GM12878 (cell line): ENCODE measurements at regions of chr5 and their contacts with region 1.

Region 1: DNA sequence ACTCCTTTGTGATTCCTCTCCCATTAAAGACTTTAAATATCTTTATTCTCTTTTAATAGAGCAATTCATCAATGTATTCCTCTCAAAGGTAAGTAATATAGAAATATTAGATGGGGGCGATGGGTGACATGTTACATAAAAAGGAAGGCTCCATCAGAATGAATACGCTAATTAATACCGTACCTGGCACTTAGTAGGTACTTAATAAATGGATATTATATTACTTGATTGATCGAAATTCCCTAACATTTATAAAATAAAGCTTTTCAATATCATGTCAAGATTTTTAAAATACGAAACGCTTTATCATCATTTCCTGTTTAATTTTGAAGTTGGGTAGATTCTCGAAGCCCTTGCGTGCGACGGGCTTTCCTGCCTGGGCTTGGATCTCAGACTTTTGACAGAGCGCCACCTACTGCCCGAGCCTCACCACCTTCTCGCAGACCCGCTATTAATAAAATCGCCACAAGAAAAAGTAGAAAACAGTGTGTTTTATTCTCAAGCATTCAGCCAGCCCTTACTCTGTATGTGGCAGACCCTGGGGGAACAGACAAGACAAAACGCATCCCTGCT is 99.4 kb downstream of the C5orf15 start:
- DNase-seq: no peak
- ATAC-seq: peak; percentile 85
- H3K4me3 ChIP-seq: no peak overlapping the region
- H3K27ac ChIP-seq: no peak overlapping the region
- H3K4me1 ChIP-seq: no peaks in the 10 kb centered on the region
- H3K27me3 ChIP-seq: no peaks in the 10 kb centered on the region
- CTCF ChIP-seq: peak; percentile 77 to 88 (median 82)
- EP300 ChIP-seq: no peak
- POLR2A ChIP-seq: no peak
- RAD21 ChIP-seq: peak; percentile 81

Region 2: GRCh38 chr5:133111299-133111698 is 757.7 kb before region 1 on chr5:
- CTCF ChIA-PET with region 1: interaction called, 7 read pairs
- POLR2A ChIA-PET with region 1: no interaction called
- RAD21 ChIA-PET with region 1: no interaction called
- SMC1A ChIA-PET with region 1: interaction called, 5 read pairs
- in situ Hi-C with region 1: loop called (anchors 10 kb)
- intact Hi-C with region 1: loop called (anchors 5 kb)
- DNase-seq: peak; percentile 45
- ATAC-seq: peak; percentile 84
- H3K4me3 ChIP-seq: no peak overlapping the region
- H3K27ac ChIP-seq: no peak overlapping the region
- H3K4me1 ChIP-seq: peaks cover 14% of the 10 kb centered on the region
- H3K27me3 ChIP-seq: no peaks in the 10 kb centered on the region
- CTCF ChIP-seq: peak; percentile 88 to 99 (median 92); a peak in 5 of 6 replicates
- EP300 ChIP-seq: no peak
- POLR2A ChIP-seq: no peak
- RAD21 ChIP-seq: peak; percentile 99

Region 3: DNA sequence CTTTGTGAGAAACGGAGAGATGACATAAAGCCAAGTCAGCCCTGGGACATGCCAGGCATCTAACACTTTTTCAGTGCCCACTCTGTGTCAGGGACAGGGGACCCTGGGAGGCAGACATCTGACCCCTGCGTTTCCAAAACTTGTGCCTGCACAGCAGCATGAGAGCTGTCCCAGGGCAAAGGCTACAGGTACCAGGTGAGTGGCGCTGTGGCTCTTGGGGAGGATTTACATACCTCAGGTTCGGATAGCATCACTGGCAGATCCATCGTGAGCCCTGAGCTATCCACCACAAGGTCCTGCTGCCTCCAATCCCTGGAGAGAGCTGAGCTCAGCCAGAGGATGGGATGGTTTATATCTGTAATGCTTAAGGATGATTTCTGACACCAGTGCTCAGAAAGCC is 309.1 kb before region 1 on chr5:
- CTCF ChIA-PET with region 1: interaction called, 13 read pairs
- POLR2A ChIA-PET with region 1: no interaction called
- RAD21 ChIA-PET with region 1: no interaction called
- SMC1A ChIA-PET with region 1: no interaction called
- in situ Hi-C with region 1: no loop called
- intact Hi-C with region 1: no loop called
- DNase-seq: no peak
- ATAC-seq: no peak
- H3K4me3 ChIP-seq: no peak overlapping the region
- H3K27ac ChIP-seq: no peak overlapping the region
- H3K4me1 ChIP-seq: no peaks in the 10 kb centered on the region
- H3K27me3 ChIP-seq: peaks cover 0 to 5% of the 10 kb centered on the region in 2 experiments; a peak in 3 of 4 replicates
- CTCF ChIP-seq: no peak
- EP300 ChIP-seq: no peak
- POLR2A ChIP-seq: no peak
- RAD21 ChIP-seq: no peak

Region 4: DNA sequence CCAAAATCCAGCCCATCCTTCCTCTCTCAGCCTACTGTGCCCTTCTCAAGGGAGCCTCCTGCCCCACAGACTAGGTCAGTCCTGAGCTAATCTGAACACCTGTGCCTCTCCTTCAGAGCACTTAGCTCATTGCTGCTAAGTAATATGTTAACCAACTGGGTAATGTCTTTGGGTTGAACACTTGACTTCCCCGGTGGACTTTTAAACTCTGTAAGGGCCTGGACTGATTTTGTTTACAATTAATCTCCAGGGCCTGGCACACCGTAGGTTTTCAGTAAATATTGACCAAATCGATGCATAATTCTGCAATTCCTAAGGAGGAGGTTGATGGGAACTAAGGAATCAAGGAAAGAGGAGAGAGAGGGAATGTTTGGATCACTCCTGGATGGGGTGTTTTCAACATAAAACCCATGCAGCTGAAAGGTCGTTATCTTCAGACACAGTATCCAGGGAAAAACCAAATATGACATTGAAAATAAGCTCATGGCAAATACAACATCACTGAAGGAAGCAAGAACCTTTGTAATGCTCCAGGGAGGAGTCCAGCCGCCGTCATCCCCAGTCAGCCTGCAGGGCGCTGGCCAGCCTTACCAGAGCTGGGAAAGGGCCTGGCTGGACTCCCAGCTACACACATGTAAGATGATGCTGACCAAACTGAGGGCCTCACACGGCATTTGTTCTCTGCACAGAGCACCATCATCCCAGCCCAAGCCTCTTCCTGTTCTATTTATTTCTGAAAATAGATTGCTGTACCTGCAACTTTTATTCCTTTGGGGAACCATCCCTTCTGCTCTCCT is 66.9 kb before region 1 on chr5:
- CTCF ChIA-PET with region 1: interaction called, 10 read pairs
- POLR2A ChIA-PET with region 1: no interaction called
- RAD21 ChIA-PET with region 1: no interaction called
- SMC1A ChIA-PET with region 1: interaction called, 5 read pairs
- in situ Hi-C with region 1: no loop called
- intact Hi-C with region 1: no loop called
- DNase-seq: no peak
- ATAC-seq: no peak
- H3K4me3 ChIP-seq: no peak overlapping the region
- H3K27ac ChIP-seq: no peak overlapping the region
- H3K4me1 ChIP-seq: no peaks in the 10 kb centered on the region
- H3K27me3 ChIP-seq: peaks cover 0 to 8% of the 10 kb centered on the region in 2 experiments; a peak in 2 of 4 replicates
- CTCF ChIP-seq: no peak
- EP300 ChIP-seq: no peak
- POLR2A ChIP-seq: no peak
- RAD21 ChIP-seq: no peak

Region 5: GRCh38 chr5:133838286-133838685 is 30.7 kb before region 1 on chr5:
- CTCF ChIA-PET with region 1: interaction called, 10 read pairs
- POLR2A ChIA-PET with region 1: no interaction called
- RAD21 ChIA-PET with region 1: interaction called, 3 read pairs
- SMC1A ChIA-PET with region 1: interaction called, 7 read pairs
- in situ Hi-C with region 1: no loop called
- intact Hi-C with region 1: no loop called
- DNase-seq: no peak
- ATAC-seq: no peak
- H3K4me3 ChIP-seq: no peak overlapping the region
- H3K27ac ChIP-seq: no peak overlapping the region
- H3K4me1 ChIP-seq: no peaks in the 10 kb centered on the region
- H3K27me3 ChIP-seq: no peaks in the 10 kb centered on the region
- CTCF ChIP-seq: no peak
- EP300 ChIP-seq: no peak
- POLR2A ChIP-seq: no peak
- RAD21 ChIP-seq: no peak

Region 6: GRCh38 chr5:133944263-133945185 is 75.5 kb after region 1 on chr5:
- CTCF ChIA-PET with region 1: interaction called, 41 read pairs
- POLR2A ChIA-PET with region 1: no interaction called
- RAD21 ChIA-PET with region 1: interaction called, 11 read pairs
- SMC1A ChIA-PET with region 1: interaction called, 10 read pairs
- in situ Hi-C with region 1: no loop called
- intact Hi-C with region 1: no loop called
- DNase-seq: no peak
- ATAC-seq: peak; percentile 94
- H3K4me3 ChIP-seq: no peak overlapping the region
- H3K27ac ChIP-seq: no peak overlapping the region
- H3K4me1 ChIP-seq: peaks cover 3% of the 10 kb centered on the region
- H3K27me3 ChIP-seq: no peaks in the 10 kb centered on the region
- CTCF ChIP-seq: peak; percentile 74 to 84 (median 75)
- EP300 ChIP-seq: no peak
- POLR2A ChIP-seq: no peak
- RAD21 ChIP-seq: peak; percentile 92

Region 7: DNA sequence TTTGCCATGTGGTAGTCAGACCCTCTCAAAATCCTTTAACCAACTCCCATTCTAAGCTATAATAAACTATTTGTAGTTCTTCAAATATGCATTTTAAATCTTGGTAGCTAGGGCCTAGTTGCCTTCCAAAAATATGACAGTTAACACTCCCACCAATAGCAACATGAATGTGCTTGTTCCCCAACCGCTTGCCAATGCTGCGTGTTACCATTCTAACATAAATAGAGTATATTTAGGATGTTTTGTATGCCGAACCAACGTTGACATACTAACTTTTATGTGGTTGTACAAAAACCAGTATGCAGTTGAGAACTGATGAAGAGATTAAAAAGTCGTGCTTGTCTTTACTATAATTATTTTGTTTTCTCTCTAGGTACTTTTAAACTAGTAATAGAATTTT is 511.3 kb after region 1 on chr5:
- CTCF ChIA-PET with region 1: no interaction called
- POLR2A ChIA-PET with region 1: no interaction called
- RAD21 ChIA-PET with region 1: no interaction called
- SMC1A ChIA-PET with region 1: no interaction called
- in situ Hi-C with region 1: no loop called
- intact Hi-C with region 1: no loop called
- DNase-seq: no peak
- ATAC-seq: no peak
- H3K4me3 ChIP-seq: no peak overlapping the region
- H3K27ac ChIP-seq: no peak overlapping the region
- H3K4me1 ChIP-seq: no peaks in the 10 kb centered on the region
- H3K27me3 ChIP-seq: no peaks in the 10 kb centered on the region
- CTCF ChIP-seq: no peak
- EP300 ChIP-seq: no peak
- POLR2A ChIP-seq: no peak
- RAD21 ChIP-seq: no peak